HEK293 (cell line): ENCODE measurements at regions of chr18 and their contacts with region 1.

Region 1: DNA sequence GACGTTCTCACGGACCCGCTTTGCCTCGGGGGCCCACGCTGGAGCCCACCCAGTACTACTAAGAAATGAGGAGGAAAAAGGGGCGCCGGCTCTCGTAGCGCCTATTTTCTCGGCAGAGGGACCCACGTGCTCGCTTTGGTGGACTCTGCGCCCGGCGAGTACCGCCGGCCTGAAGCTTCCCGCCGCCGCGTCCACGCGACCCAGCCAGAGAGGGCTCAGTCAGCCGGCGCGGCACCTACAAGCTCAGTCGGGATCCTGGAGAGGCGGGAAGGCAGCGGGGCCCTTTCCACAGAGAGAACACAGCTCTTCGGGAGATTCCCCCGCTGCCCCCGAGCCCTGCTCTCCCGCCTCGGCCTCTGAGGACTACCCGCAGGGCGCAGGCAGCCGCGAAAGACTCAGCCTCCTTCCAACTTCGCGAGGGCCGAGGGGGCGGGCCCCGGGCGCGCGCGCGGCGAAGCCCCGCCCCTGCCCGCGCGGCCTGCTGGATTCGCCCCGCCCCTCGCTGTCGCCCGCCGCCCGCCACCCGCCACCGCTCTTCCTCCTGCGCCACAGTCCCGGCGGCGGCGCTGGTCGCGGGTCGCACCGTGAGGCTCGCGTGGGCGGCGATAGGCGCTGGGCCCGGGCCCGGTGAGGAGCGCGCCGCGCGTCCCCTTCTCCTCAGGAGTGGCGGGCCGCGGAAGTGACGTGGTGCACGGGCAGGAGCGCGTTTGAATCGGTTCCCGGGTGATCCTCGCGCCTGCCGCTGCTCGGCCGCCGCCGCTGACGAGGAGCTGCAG is at the start of gene SMCHD1:
- H3K4me3 ChIP-seq: peak within 1 kb of the TSS; percentile 93
- H3K27ac ChIP-seq: peak within 1 kb of the TSS; percentile 99
- H3K4me1 ChIP-seq: peaks cover 7% of the 10 kb centered on the region
- CTCF ChIP-seq: 0 out of 2 replicates have a peak, but pooled peaks have one; percentile 8

Region 2: GRCh38 chr18:2448565-2449151 is 206.7 kb before region 1 on chr18:
- CTCF ChIA-PET with region 1: no interaction called
- POLR2A ChIA-PET with region 1: no interaction called
- H3K4me3 ChIP-seq: no peak overlapping the region
- H3K27ac ChIP-seq: no peak overlapping the region
- H3K4me1 ChIP-seq: no peaks in the 10 kb centered on the region
- CTCF ChIP-seq: no peak

Region 3: GRCh38 chr18:2571200-2572143 is 83.9 kb before region 1 on chr18 and contains the starts of genes METTL4 and NDC80:
- CTCF ChIA-PET with region 1: no interaction called
- POLR2A ChIA-PET with region 1: interaction called, 12 read pairs
- H3K4me3 ChIP-seq: peak within 1 kb of the TSS; percentile 84
- H3K27ac ChIP-seq: peak within 1 kb of the TSS; percentile 97
- H3K4me1 ChIP-seq: no peaks in the 10 kb centered on the region
- CTCF ChIP-seq: no peak; the same call in 1 of the 2 replicates

Region 4: GRCh38 chr18:2729757-2730156 is 74.4 kb after region 1 on chr18:
- CTCF ChIA-PET with region 1: no interaction called
- POLR2A ChIA-PET with region 1: no interaction called
- H3K4me3 ChIP-seq: no peak overlapping the region
- H3K27ac ChIP-seq: no peak overlapping the region
- H3K4me1 ChIP-seq: no peaks in the 10 kb centered on the region
- CTCF ChIP-seq: no peak

Region 5: GRCh38 chr18:3305354-3305762 is 650.0 kb after region 1 on chr18:
- CTCF ChIA-PET with region 1: no interaction called
- POLR2A ChIA-PET with region 1: interaction called, 10 read pairs
- H3K4me3 ChIP-seq: no peak overlapping the region
- H3K27ac ChIP-seq: no peak overlapping the region
- H3K4me1 ChIP-seq: no peaks in the 10 kb centered on the region
- CTCF ChIP-seq: no peak